Psoas muscle (tissue), 8 donors: ENCODE measurements at regions of chr15 and their contacts with region 1.

Region 1: DNA sequence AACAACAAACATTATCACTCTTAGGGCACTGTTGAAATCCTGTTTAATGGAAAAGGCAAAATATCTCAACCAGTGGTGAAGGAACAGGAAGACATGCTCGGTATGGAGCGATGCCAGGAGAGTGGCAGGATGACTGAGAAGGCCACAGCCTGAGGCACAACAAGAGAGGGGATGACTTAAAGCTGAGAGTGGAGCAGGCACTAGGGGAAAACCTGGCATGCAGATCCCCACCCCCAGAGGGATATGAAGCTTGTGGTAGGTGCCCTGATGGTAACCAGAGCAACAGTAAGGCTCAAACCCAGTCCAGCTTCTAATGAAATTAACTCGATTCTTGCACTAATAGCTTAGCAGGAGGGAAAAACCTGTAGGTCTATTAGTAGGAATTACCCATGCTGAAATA is 40.4 kb downstream of the LYSMD4 start:
- DNase-seq: no peak
- ATAC-seq: peak in 1 of 4 donors; percentile 30
- H3K4me3 ChIP-seq: no peak overlapping the region
- H3K27ac ChIP-seq: no peak overlapping the region
- H3K4me1 ChIP-seq: no peaks in the 10 kb centered on the region
- H3K27me3 ChIP-seq: no peaks in the 10 kb centered on the region
- CTCF ChIP-seq: no peak

Region 2: GRCh38 chr15:99631255-99631654 is 61.6 kb before region 1 on chr15:
- intact Hi-C with region 1: loop called in 1 of 2 experiments (anchors 10 kb)
- DNase-seq: no peak
- ATAC-seq: peak in 3 of 4 donors; percentile 62 to 82 (median 65)
- H3K4me3 ChIP-seq: no peak overlapping the region
- H3K27ac ChIP-seq: peak overlapping the region; percentile 54
- H3K4me1 ChIP-seq: peaks cover 65% of the 10 kb centered on the region
- H3K27me3 ChIP-seq: no peaks in the 10 kb centered on the region
- CTCF ChIP-seq: no peak

Region 3: DNA sequence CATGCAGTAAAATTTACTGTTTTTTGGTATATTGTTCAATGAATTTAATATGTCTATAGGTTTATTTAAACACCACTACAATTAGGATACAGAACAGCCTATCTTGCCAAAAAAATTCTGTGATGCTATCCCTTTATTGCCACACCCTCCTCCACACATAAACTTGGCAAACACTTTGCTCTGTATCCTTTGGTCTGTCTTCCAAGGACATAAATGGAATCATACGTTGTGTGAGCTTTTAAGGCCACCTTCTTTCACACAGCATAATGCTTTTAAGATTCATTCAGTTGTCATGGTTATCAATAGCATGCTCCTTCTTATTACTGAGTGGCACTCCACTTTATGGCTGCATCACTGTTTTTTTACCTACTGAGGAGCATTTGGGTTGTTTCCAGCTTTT is 764.4 kb after region 1 on chr15:
- intact Hi-C with region 1: no loop called
- DNase-seq: no peak
- ATAC-seq: no peak
- H3K4me3 ChIP-seq: no peak overlapping the region
- H3K27ac ChIP-seq: no peak overlapping the region
- H3K4me1 ChIP-seq: no peaks in the 10 kb centered on the region
- H3K27me3 ChIP-seq: no peaks in the 10 kb centered on the region
- CTCF ChIP-seq: no peak